Activated CD8-positive, alpha-beta memory T cell treated with anti-CD3 and anti-CD28 coated beads, Interleukin-2, amount 10 ng/mL, durations not matched to agents 7 days and 5 days (primary cell): ENCODE measurements at regions of chr10 and their contacts with region 1.

Region 1: GRCh38 chr10:133438711-133439273 is 14.4 kb upstream of the SPRN start:
- DNase-seq: no peak
- ATAC-seq: peak; percentile 41
- H3K4me3 Mint-ChIP-seq: no peak overlapping the region
- H3K27ac Mint-ChIP-seq: no peak overlapping the region
- H3K4me1 Mint-ChIP-seq: peaks cover 21% of the 10 kb centered on the region
- H3K27me3 Mint-ChIP-seq: peaks cover 9% of the 10 kb centered on the region

Region 2: GRCh38 chr10:133475821-133476640 is 37.2 kb after region 1 on chr10:
- CTCF ChIA-PET with region 1: interaction called, 11 read pairs
- DNase-seq: peak; percentile 69
- ATAC-seq: peak; percentile 95
- H3K4me3 Mint-ChIP-seq: no peak overlapping the region
- H3K27ac Mint-ChIP-seq: no peak overlapping the region
- H3K4me1 Mint-ChIP-seq: peaks cover 31% of the 10 kb centered on the region
- H3K27me3 Mint-ChIP-seq: peaks cover 4% of the 10 kb centered on the region

Region 3: GRCh38 chr10:133489816-133490588 is 51.2 kb after region 1 on chr10:
- CTCF ChIA-PET with region 1: interaction called, 15 read pairs
- DNase-seq: no peak
- ATAC-seq: no peak
- H3K4me3 Mint-ChIP-seq: no peak overlapping the region
- H3K27ac Mint-ChIP-seq: no peak overlapping the region
- H3K4me1 Mint-ChIP-seq: peaks cover 2% of the 10 kb centered on the region
- H3K27me3 Mint-ChIP-seq: peaks cover 16% of the 10 kb centered on the region

Region 4: DNA sequence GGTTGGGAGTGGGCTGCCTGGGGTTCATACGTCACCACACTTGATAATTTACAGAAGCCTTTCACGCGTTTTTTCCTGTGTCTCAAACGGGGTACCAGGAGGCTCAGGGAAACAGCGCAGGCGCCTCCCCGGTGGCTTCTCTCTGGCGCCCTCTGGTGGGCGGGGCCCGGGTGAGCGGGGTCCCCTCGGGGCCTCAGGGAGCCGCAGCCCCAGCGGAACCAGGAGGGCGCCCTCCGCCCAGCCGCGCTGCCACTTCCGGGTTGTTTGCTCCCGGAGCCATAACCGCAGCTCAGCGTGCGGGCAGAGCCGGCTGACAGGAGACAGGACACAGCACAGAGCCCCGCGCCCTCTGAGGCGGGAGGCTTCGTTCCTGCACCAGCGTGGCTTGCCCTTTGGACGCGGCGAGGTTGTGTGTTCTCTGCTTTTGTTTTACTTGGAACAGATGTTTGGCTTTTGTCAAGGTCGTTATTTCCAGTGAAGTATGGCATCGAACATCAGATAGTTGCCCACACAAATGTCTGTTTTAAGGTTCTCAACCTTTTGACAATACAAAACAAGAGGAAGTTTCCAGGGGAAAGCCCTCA is 81.5 kb after region 1 on chr10:
- CTCF ChIA-PET with region 1: interaction called, 13 read pairs
- DNase-seq: peak; percentile 90
- ATAC-seq: peak; percentile 100
- H3K4me3 Mint-ChIP-seq: peak overlapping the region; percentile 13
- H3K27ac Mint-ChIP-seq: no peak overlapping the region
- H3K4me1 Mint-ChIP-seq: peaks cover 8% of the 10 kb centered on the region
- H3K27me3 Mint-ChIP-seq: peaks cover 51% of the 10 kb centered on the region